CD4-positive, alpha-beta memory T cell (primary cell): ENCODE measurements at regions of chr6 and their contacts with region 1.

Region 1: DNA sequence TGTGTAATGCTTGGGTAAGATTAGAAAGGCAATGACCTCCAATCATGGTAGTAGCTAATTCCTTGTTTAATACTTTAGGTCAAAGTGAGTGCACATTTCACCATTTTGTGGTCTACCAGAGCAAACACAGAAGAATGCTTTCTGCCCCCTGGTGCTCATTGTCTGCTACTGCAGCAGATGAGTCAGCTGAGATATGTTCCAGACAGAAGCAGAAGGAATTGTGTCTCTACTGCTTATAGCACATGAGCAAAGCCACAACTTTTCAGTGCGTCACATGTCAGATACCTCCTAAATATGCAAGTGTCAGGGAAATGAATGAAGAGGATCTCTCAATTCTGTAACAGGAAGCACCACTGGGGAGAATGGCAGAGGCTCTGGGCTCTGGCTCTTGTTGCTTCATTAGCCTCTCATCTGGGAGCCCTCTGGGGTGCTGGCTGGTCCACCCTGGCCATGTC is 308.9 kb downstream of the ALDH8A1 start:
- DNase-seq: peak; percentile 73 to 78 (median 75)
- H3K4me3 ChIP-seq: no peak overlapping the region
- H3K4me3 Mint-ChIP-seq: no peak overlapping the region
- H3K27ac ChIP-seq: no peak overlapping the region
- H3K27ac Mint-ChIP-seq: no peak overlapping the region
- H3K4me1 ChIP-seq: peaks cover 7% of the 10 kb centered on the region
- H3K4me1 Mint-ChIP-seq: peaks cover 10 to 20% (median 15%) of the 10 kb centered on the region in 4 donors
- H3K27me3 ChIP-seq: no peaks in the 10 kb centered on the region
- H3K27me3 Mint-ChIP-seq: no peaks in the 10 kb centered on the region

Region 2: GRCh38 chr6:134166511-134167261 is 474.3 kb before region 1 on chr6:
- CTCF ChIA-PET with region 1: interaction called, 31 read pairs
- POLR2A ChIA-PET with region 1: interaction called, 5 read pairs
- intact Hi-C with region 1: no loop called
- DNase-seq: no peak
- H3K4me3 ChIP-seq: no peak overlapping the region
- H3K4me3 Mint-ChIP-seq: no peak overlapping the region
- H3K27ac ChIP-seq: no peak overlapping the region
- H3K27ac Mint-ChIP-seq: no peak overlapping the region
- H3K4me1 ChIP-seq: peaks cover 23% of the 10 kb centered on the region
- H3K4me1 Mint-ChIP-seq: peaks cover 6 to 23% (median 18%) of the 10 kb centered on the region in 4 donors
- H3K27me3 ChIP-seq: no peaks in the 10 kb centered on the region
- H3K27me3 Mint-ChIP-seq: no peaks in the 10 kb centered on the region

Region 3: GRCh38 chr6:134436281-134436815 is 204.7 kb before region 1 on chr6:
- CTCF ChIA-PET with region 1: interaction called, 5 read pairs
- POLR2A ChIA-PET with region 1: no interaction called
- intact Hi-C with region 1: loop called (anchors 5 kb)
- DNase-seq: peak in 3 of 5 donors; percentile 6 to 77 (median 14)
- H3K4me3 ChIP-seq: peak overlapping the region; percentile 5 to 37
- H3K4me3 Mint-ChIP-seq: peak overlapping the region; percentile 76 to 91 (median 83)
- H3K27ac ChIP-seq: no peak overlapping the region
- H3K27ac Mint-ChIP-seq: peak overlapping the region; percentile 13 to 88 (median 51)
- H3K4me1 ChIP-seq: peaks cover 23% of the 10 kb centered on the region
- H3K4me1 Mint-ChIP-seq: peaks cover 18 to 20% (median 19%) of the 10 kb centered on the region in 4 donors
- H3K27me3 ChIP-seq: no peaks in the 10 kb centered on the region
- H3K27me3 Mint-ChIP-seq: no peaks in the 10 kb centered on the region

Region 4: DNA sequence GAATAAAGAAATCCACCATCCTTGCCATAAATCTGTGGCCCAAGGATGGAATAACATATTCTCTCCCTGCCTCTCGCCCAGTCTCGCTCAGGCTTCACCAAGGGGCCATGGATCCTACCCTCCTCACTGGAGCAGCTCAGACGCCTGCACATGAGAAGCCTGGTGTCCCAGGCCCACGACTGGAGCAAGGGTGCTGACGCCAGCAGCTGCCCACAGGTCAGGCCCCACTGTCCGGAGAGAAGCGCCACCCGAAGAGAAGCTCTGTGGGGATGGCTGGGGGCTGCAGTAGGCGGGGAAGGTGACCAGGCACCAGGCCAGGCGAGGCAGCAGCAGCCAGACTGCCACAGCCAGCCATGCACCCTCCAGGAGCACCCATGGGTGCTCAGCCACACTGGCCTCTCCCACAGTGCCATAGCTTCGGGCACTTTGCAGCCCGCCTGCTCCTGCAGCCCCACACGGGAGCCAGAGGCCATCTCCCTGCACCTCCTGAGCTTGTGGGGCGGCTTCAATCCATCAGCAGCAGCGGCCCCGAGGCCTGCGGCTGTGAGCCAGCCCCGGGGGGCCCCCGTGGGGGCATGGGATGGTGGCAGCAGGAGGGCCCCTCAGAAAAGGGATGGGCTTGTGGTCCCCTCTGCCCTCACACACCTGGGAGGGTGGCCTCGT is 36.9 kb before region 1 on chr6:
- CTCF ChIA-PET with region 1: no interaction called
- POLR2A ChIA-PET with region 1: no interaction called
- intact Hi-C with region 1: no loop called
- DNase-seq: no peak
- H3K4me3 ChIP-seq: no peak overlapping the region
- H3K4me3 Mint-ChIP-seq: no peak overlapping the region
- H3K27ac ChIP-seq: no peak overlapping the region
- H3K27ac Mint-ChIP-seq: no peak overlapping the region
- H3K4me1 ChIP-seq: no peaks in the 10 kb centered on the region
- H3K4me1 Mint-ChIP-seq: peaks cover 0 to 1% (median 0%) of the 10 kb centered on the region in 4 donors
- H3K27me3 ChIP-seq: no peaks in the 10 kb centered on the region
- H3K27me3 Mint-ChIP-seq: peaks cover 2 to 4% of the 10 kb centered on the region in 2 donors

Region 5: GRCh38 chr6:134630508-134631121 is 10.4 kb before region 1 on chr6:
- CTCF ChIA-PET with region 1: interaction called, 13 read pairs
- POLR2A ChIA-PET with region 1: no interaction called
- intact Hi-C with region 1: no loop called
- DNase-seq: no peak
- H3K4me3 ChIP-seq: no peak overlapping the region
- H3K4me3 Mint-ChIP-seq: peak overlapping the region in 1 of 8 donors; percentile 2
- H3K27ac ChIP-seq: no peak overlapping the region
- H3K27ac Mint-ChIP-seq: no peak overlapping the region
- H3K4me1 ChIP-seq: peaks cover 9% of the 10 kb centered on the region
- H3K4me1 Mint-ChIP-seq: peaks cover 12 to 32% (median 21%) of the 10 kb centered on the region in 4 donors
- H3K27me3 ChIP-seq: no peaks in the 10 kb centered on the region
- H3K27me3 Mint-ChIP-seq: no peaks in the 10 kb centered on the region

Region 6: GRCh38 chr6:134720353-134721059 is 79.5 kb after region 1 on chr6:
- CTCF ChIA-PET with region 1: no interaction called
- POLR2A ChIA-PET with region 1: no interaction called
- intact Hi-C with region 1: no loop called
- DNase-seq: no peak
- H3K4me3 ChIP-seq: no peak overlapping the region
- H3K4me3 Mint-ChIP-seq: no peak overlapping the region
- H3K27ac ChIP-seq: no peak overlapping the region
- H3K27ac Mint-ChIP-seq: no peak overlapping the region
- H3K4me1 ChIP-seq: no peaks in the 10 kb centered on the region
- H3K4me1 Mint-ChIP-seq: no peaks in the 10 kb centered on the region
- H3K27me3 ChIP-seq: no peaks in the 10 kb centered on the region
- H3K27me3 Mint-ChIP-seq: peaks cover 1 to 5% of the 10 kb centered on the region in 2 donors

Region 7: GRCh38 chr6:134822920-134823709 is 182.1 kb after region 1 on chr6:
- CTCF ChIA-PET with region 1: interaction called, 31 read pairs
- POLR2A ChIA-PET with region 1: no interaction called
- intact Hi-C with region 1: loop called (anchors 1 kb)
- DNase-seq: peak in 4 of 5 donors; percentile 46 to 54 (median 51)
- H3K4me3 ChIP-seq: no peak overlapping the region
- H3K4me3 Mint-ChIP-seq: no peak overlapping the region
- H3K27ac ChIP-seq: no peak overlapping the region
- H3K27ac Mint-ChIP-seq: no peak overlapping the region
- H3K4me1 ChIP-seq: no peaks in the 10 kb centered on the region
- H3K4me1 Mint-ChIP-seq: peaks cover 0 to 3% (median 0%) of the 10 kb centered on the region in 4 donors
- H3K27me3 ChIP-seq: no peaks in the 10 kb centered on the region
- H3K27me3 Mint-ChIP-seq: peaks cover 3 to 7% of the 10 kb centered on the region in 2 donors

Region 8: DNA sequence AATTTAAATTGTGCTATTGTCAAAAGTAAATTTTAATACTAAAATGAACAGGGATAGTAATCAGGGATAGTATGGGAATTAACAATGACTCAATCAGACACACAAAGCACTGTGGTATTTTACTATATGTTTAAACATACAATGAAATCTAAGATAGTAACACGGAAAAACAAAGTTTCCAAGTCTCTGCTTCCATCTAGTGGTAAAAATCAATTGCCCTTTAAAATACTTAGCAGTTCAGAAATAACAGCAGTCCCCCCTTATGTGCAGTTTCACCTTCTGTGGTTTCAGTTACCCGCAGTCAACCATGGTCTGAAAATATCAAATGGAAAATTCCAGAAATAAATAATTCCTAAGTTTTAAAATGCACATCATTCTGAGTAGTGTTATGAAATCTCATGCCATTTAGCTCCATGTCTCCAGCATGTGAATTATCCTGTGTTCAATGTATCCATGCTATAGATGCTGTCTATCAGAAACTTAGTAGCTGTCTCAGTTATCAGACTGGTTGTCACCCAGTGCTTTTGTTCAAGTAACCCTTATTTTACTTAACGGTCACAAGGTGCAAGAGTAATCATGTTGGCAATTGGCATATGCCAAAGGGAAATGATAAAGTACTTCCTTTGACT is 798.0 kb after region 1 on chr6:
- CTCF ChIA-PET with region 1: no interaction called
- POLR2A ChIA-PET with region 1: no interaction called
- intact Hi-C with region 1: loop called (anchors 5 kb)
- DNase-seq: peak in 2 of 5 donors; percentile 6 to 15
- H3K4me3 ChIP-seq: no peak overlapping the region
- H3K4me3 Mint-ChIP-seq: peak overlapping the region in 3 of 8 donors; percentile 5 to 29 (median 28)
- H3K27ac ChIP-seq: no peak overlapping the region
- H3K27ac Mint-ChIP-seq: peak overlapping the region in 1 of 7 donors; percentile 5
- H3K4me1 ChIP-seq: peaks cover 15% of the 10 kb centered on the region
- H3K4me1 Mint-ChIP-seq: peaks cover 5 to 19% (median 11%) of the 10 kb centered on the region in 4 donors
- H3K27me3 ChIP-seq: no peaks in the 10 kb centered on the region
- H3K27me3 Mint-ChIP-seq: no peaks in the 10 kb centered on the region